HEK293 (cell line): ENCODE measurements at regions of chr1 and their contacts with region 1.

Region 1: GRCh38 chr1:235504496-235505222 is 407 bp upstream of the B3GALNT2 start:
- H3K4me3 ChIP-seq: peak overlapping the region; percentile 94
- H3K27ac ChIP-seq: peak overlapping the region; percentile 94
- H3K4me1 ChIP-seq: peaks cover 8% of the 10 kb centered on the region
- CTCF ChIP-seq: peak; percentile 100

Region 2: GRCh38 chr1:235160957-235161684 is 343.5 kb before region 1 on chr1 and contains the start of gene RBM34:
- CTCF ChIA-PET with region 1: no interaction called
- POLR2A ChIA-PET with region 1: interaction called, 12 read pairs
- H3K4me3 ChIP-seq: peak within 1 kb of the TSS; percentile 74
- H3K27ac ChIP-seq: peak within 1 kb of the TSS; percentile 77
- H3K4me1 ChIP-seq: no peaks in the 10 kb centered on the region
- CTCF ChIP-seq: peak; percentile 74; the same call in 1 of the 2 replicates

Region 3: GRCh38 chr1:235328357-235329138 is 176.1 kb before region 1 on chr1 and contains the start of gene GGPS1:
- CTCF ChIA-PET with region 1: no interaction called
- POLR2A ChIA-PET with region 1: interaction called, 17 read pairs
- H3K4me3 ChIP-seq: peak within 1 kb of the TSS; percentile 97
- H3K27ac ChIP-seq: peak within 1 kb of the TSS; percentile 95
- H3K4me1 ChIP-seq: peaks cover 38% of the 10 kb centered on the region
- CTCF ChIP-seq: no peak; the same call in 1 of the 2 replicates

Region 4: GRCh38 chr1:235486321-235486720 is 18.3 kb before region 1 on chr1:
- CTCF ChIA-PET with region 1: interaction called, 11 read pairs
- POLR2A ChIA-PET with region 1: interaction called, 21 read pairs
- H3K4me3 ChIP-seq: no peak overlapping the region
- H3K27ac ChIP-seq: no peak overlapping the region
- H3K4me1 ChIP-seq: no peaks in the 10 kb centered on the region
- CTCF ChIP-seq: no peak

Region 5: DNA sequence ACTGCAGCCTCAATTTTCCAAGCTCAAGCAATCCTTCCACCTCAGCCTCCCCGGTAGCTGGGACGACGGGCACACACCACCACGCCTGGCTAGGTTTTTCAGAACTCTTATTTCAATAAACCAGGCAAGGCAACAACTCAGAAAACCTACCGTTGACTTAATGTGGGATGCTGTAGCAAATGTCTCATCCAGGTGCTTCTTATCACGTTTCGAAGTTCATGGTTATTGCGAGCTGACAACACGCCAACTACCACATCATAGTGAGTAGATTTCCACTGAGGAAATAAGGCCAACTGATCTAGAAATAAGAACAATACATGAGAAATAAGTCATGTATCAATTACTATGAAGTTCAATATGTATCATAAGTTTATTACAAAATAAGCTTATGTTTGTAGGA is 10.1 kb before region 1 on chr1:
- CTCF ChIA-PET with region 1: interaction called, 22 read pairs
- POLR2A ChIA-PET with region 1: interaction called, 9 read pairs
- H3K4me3 ChIP-seq: no peak overlapping the region
- H3K27ac ChIP-seq: no peak overlapping the region
- H3K4me1 ChIP-seq: no peaks in the 10 kb centered on the region
- CTCF ChIP-seq: no peak

Region 6: DNA sequence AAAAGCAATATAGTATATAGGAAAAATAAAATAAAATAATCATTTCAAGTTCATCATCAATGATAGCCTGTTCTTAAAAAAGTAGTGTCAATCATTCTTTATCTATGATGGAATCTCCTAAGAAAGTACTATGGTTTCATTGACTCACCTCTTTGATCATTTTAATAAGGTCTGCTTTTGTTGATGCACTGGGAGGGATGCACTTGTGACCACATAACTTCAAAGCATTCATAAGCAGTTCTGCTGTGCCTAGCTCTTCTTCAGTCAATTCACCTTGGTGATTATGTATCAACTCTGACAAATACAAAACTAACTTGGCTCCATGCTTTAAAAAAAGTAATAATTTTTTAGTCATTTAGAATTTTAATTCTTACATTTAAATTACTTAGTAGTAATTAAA is 229.7 kb after region 1 on chr1:
- CTCF ChIA-PET with region 1: interaction called, 20 read pairs
- POLR2A ChIA-PET with region 1: interaction called, 4 read pairs
- H3K4me3 ChIP-seq: no peak overlapping the region
- H3K27ac ChIP-seq: no peak overlapping the region
- H3K4me1 ChIP-seq: peaks cover 5% of the 10 kb centered on the region; the same call in 1 of the 2 replicates
- CTCF ChIP-seq: no peak

Region 7: DNA sequence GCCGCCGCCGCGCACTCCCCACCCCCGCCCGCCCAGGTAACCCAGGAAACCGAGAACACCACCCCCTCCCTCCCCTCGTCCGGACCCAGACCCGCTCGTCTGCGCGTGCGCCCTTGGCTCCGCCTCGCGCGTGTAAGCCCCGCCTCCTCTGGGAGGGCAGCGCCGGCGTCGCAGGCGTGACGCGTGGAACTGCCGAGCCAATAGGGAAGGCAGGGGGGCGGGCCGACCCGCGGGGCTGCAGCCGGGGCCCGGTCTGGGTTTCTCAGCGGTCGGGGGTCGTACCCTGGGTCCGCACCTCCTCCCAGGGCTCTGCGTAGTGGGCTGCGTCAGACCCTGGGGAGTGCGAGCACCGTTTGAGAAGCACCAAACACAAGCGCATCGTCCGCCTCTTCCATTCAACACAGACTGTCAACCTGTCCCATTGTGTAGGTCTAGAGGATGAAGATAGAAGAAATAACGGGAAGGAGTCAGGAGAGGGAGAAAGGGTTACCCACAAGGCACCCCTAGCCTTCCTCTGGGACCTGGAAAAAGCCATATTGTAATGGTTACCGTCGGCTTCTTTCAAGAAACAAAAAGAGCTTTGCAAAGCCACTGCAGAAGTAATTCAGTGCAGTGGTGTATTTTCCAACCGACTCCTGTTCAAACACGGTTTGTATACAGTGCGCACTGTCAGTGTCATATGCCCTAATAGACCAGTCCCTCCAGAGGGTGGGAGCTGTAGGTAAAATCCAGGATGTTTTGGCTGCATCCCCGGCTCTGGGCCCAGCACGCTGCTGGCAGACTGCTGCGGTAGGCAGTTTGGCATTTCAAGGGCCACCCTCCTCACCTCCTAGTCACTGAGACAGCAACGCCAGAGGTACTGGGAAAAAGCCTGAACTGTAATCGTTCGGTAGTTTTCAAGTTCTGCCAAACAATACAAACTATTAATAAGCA is 362.5 kb after region 1 on chr1:
- CTCF ChIA-PET with region 1: no interaction called
- POLR2A ChIA-PET with region 1: interaction called, 10 read pairs
- H3K4me3 ChIP-seq: peak overlapping the region; percentile 70
- H3K27ac ChIP-seq: peak overlapping the region; percentile 73
- H3K4me1 ChIP-seq: peaks cover 9% of the 10 kb centered on the region; the same call in 1 of the 2 replicates
- CTCF ChIP-seq: no peak